SK-MEL-5 (cell line): ENCODE measurements at regions of chr22 and their contacts with region 1.

Region 1: DNA sequence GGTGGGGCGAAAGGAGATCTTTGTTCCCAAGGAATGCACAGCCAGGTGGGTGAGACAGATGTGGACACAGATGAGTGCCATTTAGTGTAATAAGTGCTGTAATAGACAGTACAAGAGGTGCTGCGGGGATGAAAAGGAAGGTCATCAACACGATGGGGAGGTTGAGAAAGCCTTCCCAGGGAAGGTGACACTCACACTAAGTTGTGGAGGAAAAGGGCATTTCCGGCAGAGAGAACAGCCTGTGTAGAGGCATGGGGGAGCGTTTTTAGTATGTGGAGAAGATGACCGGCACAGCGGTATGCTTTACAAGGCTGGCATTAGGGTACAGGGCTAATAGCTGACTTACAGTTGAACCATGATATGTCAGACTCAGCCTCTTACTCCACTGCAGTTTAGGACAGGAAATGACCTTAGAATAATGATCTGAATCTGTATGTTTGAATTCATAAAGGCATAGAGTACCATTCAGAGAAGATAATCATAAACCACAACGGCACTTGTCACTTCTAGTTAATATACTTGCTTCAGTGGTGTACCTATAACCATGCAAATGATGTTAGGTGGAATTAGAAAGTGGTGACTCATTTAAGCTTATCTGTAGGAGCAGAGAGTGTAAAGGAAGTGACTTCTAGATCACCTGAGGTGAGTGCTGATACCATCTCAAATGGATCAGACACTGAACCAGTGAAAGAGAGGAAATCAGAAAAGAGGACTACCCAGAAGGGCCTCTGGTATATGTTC is 60.6 kb downstream of the FAM83F start:
- DNase-seq: no peak

Region 2: GRCh38 chr22:39873965-39874364 is 181.3 kb before region 1 on chr22:
- in situ Hi-C with region 1: no loop called
- DNase-seq: peak; percentile 93

Region 3: DNA sequence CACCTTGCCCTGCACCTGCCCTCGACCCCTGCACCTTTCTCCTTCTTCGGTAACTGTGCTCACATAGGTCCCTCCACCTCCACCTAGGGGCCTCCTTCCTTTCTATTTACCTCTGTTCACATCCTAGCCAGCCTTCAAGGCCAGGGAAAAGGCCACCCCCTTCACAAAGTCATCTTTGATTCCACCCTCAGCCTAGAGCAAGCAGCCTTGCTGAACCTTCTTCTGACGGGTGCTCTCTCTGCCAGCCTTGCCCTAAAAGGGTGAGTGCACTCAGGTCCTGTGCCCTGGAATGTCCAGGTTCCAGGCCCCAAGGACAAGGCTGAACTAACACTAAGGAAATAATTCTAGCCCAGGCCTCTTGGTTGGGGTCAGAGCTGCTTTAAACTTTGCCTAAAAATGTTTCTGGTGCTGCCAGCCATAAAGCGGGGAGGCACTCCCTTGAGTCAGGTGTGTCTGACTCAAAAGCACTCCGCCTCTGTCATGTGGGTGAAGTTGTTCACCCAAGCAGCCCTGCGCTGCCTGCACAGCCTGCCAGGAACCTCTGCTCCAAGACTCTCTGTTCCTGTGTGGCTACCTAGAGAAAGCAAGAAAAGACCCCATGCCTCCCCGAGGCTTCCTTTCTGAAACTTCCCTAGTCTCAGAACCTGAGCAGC is 69.8 kb before region 1 on chr22:
- in situ Hi-C with region 1: no loop called
- DNase-seq: no peak

Region 4: DNA sequence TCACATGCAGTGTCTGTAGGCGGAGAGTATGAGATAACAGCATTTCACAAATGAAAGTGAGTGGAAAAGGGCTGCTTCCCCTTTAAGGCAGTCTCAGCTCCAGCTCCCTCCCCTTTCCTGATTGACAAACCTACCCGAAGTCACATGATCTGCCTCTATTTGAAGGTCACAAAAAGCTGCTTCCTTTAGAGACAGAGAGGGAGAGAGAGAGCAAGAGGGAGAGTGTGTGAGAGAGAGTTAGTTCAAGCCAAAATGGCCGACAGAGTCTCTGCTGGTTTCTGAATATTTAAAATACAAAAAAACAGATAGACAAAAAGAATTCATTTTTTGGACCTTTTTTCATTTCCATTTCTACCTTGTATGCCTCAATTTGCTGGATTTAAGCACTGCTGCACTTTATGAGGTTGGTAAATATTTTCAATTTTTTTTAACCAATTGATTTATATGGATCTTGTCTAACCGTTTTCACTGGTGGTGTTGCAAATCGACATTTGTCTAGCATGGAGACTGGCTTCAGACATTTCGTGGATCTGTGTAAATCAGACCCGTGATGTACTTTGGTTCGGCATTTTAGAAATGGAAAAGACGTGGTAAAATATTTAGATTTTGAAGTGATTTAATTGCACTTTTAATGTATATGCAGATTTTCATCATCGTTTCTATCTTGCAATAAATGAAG is 122.6 kb after region 1 on chr22 and contains the start of gene TNRC6B:
- in situ Hi-C with region 1: loop called (anchors 25 kb)
- DNase-seq: peak; percentile 100
- total RNA-seq, gene TNRC6B: 27.2 and 27.9 TPM in 2 replicates